WTC11 (cell line): ENCODE measurements at regions of chr20 and their contacts with region 1.

Region 1: DNA sequence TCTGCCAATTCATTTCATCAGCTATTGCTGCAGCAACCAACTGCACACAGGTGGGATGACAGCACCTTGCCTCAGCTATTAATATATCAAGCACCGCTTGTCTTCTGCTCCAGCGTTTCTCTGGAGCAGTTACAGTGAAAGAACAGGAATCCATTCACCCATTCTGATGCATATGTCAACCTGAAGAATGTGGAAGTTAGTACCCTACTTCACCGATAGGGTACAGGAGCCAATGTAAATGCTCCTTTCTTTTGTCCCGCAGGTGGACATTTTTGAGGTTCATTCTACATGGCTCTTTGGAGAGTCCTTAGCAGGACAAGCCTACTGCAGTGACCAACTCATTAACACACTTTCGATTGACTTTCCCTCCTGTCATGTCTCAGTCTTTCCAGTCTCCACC is 139.9 kb upstream of the PRND start:
- DNase-seq: no peak
- ATAC-seq: peak; percentile 92
- H3K4me3 Mint-ChIP-seq: no peak overlapping the region
- H3K27ac Mint-ChIP-seq: no peak overlapping the region
- H3K4me1 Mint-ChIP-seq: peaks cover 14% of the 10 kb centered on the region
- H3K27me3 Mint-ChIP-seq: peaks cover 36% of the 10 kb centered on the region
- CTCF ChIP-seq: peak; percentile 39

Region 2: DNA sequence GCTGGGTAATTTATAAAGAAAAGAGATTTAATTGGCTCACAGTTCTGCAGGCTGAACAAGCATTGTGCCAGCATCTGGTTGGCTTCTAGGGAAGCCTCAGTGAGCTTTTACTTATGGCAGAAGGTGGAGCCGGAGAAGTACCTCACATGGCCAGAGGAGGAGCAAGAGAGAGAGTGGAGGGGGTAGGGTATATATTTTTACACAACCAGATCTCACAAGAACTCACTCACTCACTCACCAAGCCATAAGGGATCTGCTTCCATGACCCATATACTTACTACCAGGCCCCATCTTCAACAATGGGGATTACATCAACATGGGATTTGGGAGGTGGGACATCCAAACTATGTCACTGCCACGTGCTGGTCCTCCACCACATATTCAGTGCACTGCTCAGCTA is 12.7 kb before region 1 on chr20:
- CTCF ChIA-PET with region 1: interaction called, 16 read pairs
- POLR2A ChIA-PET with region 1: no interaction called
- DNase-seq: peak; percentile 47
- ATAC-seq: peak; percentile 84
- H3K4me3 Mint-ChIP-seq: no peak overlapping the region
- H3K27ac Mint-ChIP-seq: no peak overlapping the region
- H3K4me1 Mint-ChIP-seq: peaks cover 9% of the 10 kb centered on the region
- H3K27me3 Mint-ChIP-seq: peaks cover 13% of the 10 kb centered on the region
- CTCF ChIP-seq: no peak; the same call in 1 of the 2 replicates

Region 3: DNA sequence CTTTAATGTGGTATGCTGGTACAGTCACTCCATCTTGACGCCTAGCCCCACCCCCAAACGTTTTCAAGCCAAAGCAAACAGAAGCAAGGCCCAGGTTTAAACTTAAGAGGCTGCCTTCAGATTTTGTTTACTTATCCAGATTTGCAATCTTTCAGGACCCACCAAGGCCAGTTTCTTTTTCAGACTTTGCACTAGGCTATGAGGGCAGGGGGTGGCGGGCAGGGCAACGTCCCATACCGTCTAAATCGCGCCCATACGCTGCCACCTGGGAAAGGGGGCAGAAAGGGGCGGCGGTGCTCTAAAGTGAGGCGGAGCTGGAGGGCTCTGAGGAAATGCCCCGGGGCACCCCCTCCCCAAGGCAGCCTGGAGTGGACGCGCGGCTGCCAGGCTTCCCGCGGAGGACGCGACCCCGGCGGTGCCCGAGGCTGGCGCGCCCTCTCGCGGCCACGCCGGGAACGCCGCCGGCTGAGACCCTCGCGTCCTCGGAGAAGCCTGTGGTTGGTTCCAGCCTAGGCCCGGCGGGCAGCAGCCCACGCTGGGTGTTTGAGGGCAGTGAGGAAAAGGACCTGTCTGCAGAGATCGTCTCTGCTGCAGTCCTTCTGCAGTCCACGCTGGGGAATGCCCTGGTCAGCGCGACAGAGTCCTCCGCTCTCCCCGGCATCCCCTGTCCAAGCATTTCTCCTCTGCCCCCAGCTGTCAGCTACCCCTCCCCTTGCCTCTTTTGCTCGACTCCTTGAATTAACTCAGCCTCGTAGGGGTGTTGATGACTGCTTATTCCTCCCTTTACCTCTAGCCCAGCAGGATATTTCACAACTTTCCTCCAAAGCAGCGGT is 10.7 kb after region 1 on chr20:
- CTCF ChIA-PET with region 1: interaction called, 13 read pairs
- POLR2A ChIA-PET with region 1: no interaction called
- DNase-seq: peak; percentile 74
- ATAC-seq: peak; percentile 89
- H3K4me3 Mint-ChIP-seq: peak overlapping the region; percentile 61
- H3K27ac Mint-ChIP-seq: no peak overlapping the region
- H3K4me1 Mint-ChIP-seq: peaks cover 4% of the 10 kb centered on the region
- H3K27me3 Mint-ChIP-seq: peaks cover 16% of the 10 kb centered on the region
- CTCF ChIP-seq: peak; percentile 97